ENCODE measurements at regions of chr6 and their contacts with region 1.

Region 1: DNA sequence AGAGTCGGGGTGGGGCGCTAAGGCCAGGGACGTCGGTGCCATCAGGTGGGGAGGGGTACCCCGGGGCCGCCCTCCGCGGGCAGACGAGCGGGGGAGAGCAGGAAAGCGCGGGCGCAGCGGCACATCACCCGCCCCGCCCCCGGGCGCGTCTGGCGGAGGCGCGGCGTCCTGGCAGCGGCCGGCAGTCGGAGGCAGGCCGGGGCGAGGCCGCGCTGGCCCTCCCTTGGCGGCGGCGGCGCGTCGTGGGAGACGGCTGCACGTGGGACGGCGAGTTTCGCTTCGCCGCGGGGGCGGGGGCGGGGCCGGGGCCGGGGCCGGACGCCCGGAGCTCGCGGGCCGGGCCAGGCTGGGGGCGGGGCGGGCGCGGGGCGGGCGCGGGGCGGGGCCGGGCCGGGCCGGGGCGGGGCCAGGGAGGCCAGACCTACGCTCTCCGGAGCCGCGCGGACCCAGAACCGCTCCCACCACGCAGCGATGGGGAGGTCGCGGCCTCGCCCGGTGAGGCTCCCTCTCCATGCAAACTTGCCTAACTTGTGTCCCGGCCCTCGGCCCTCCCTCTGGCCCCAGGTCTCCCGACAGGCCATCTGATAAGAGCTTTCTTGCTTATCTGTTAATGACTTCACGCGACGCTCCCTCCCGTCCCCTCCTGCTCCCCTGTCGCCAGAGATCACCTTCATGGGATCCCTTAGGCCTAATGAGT is 12.5 kb downstream of the ITPR3 start:
- DNase-seq: peak; percentile 52 to 71 (median 62)
- H3K4me3 ChIP-seq: peak overlapping the region; percentile 58
- H3K4me3 Mint-ChIP-seq: peak overlapping the region; percentile 80 to 92 (median 87)
- H3K27ac ChIP-seq: no peak overlapping the region
- H3K27ac Mint-ChIP-seq: peak overlapping the region; percentile 69 to 95 (median 93)
- H3K4me1 ChIP-seq: peaks cover 40% of the 10 kb centered on the region
- H3K4me1 Mint-ChIP-seq: peaks cover 56 to 78% (median 59%) of the 10 kb centered on the region in 3 donors
- H3K27me3 ChIP-seq: no peaks in the 10 kb centered on the region
- H3K27me3 Mint-ChIP-seq: peaks cover 0 to 4% of the 10 kb centered on the region in 2 donors

Region 2: DNA sequence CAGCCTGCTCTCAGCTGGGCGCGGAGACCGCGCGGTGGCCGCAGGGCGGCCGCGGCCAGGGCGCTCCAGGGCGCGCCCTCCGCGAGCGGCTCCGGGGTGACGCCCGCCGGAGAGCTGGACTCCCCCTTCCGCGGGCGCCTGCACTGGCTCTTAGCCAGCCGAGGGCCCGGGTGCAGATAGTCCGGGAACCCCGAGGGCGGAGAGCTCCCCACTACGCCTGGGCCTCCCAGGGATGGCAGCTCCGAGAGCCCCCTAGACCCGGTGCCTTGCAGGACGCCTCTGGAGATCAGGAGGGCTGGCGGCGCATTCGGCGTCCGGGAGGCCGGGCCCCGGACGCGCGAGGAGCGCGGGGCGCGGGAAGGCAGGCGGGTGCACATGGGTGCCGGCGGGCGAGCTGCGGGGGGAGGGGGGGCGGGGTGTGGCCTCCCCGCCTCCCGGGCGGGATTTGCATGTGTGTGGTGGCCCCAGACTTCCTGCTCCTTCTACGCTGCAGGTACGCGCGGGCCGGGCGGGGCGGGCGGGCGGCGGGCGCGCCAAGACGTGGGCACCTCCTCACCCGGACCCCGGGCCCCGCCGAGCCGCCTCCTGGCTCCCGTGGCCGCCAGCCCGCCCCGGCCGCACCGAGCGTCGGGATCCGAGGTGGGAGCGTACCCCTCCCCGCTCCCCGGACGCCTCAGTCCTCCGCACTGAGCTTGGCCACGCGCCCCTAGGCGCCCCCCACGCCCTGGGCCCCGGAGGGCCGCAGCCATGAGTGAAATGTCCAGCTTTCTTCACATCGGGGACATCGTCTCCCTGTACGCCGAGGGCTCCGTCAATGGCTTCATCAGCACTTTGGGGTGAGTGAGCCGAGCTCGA is 12.5 kb before region 1 on chr6 and contains the start of gene ITPR3:
- CTCF ChIA-PET with region 1: interaction called, 3 read pairs
- POLR2A ChIA-PET with region 1: interaction called, 12 read pairs
- DNase-seq: peak; percentile 69 to 87 (median 81)
- H3K4me3 ChIP-seq: peak within 1 kb of the TSS; percentile 90
- H3K4me3 Mint-ChIP-seq: peak within 1 kb of the TSS; percentile 95 to 98 (median 97)
- H3K27ac ChIP-seq: peak within 1 kb of the TSS; percentile 89
- H3K27ac Mint-ChIP-seq: peak within 1 kb of the TSS; percentile 95 to 100 (median 98)
- H3K4me1 ChIP-seq: peaks cover 41% of the 10 kb centered on the region
- H3K4me1 Mint-ChIP-seq: peaks cover 63 to 69% (median 69%) of the 10 kb centered on the region in 3 donors
- H3K27me3 ChIP-seq: no peaks in the 10 kb centered on the region
- H3K27me3 Mint-ChIP-seq: no peaks in the 10 kb centered on the region
- total RNA-seq, gene ITPR3: 42.0 to 43.3 TPM

Measured in CD8-positive, alpha-beta memory T cell (primary cell).